ENCODE measurements at regions of chr20 and their contacts with region 1.

Region 1: GRCh38 chr20:561437-562231 is 18.0 kb upstream of the CSNK2A1 start:
- DNase-seq: peak; percentile 71 to 86 (median 79)
- H3K4me3 ChIP-seq: no peak overlapping the region
- H3K27ac ChIP-seq: no peak overlapping the region
- H3K4me1 ChIP-seq: no peaks in the 10 kb centered on the region
- H3K27me3 ChIP-seq: peaks cover 0 to 2% (median 0%) of the 10 kb centered on the region in 5 experiments

Region 2: DNA sequence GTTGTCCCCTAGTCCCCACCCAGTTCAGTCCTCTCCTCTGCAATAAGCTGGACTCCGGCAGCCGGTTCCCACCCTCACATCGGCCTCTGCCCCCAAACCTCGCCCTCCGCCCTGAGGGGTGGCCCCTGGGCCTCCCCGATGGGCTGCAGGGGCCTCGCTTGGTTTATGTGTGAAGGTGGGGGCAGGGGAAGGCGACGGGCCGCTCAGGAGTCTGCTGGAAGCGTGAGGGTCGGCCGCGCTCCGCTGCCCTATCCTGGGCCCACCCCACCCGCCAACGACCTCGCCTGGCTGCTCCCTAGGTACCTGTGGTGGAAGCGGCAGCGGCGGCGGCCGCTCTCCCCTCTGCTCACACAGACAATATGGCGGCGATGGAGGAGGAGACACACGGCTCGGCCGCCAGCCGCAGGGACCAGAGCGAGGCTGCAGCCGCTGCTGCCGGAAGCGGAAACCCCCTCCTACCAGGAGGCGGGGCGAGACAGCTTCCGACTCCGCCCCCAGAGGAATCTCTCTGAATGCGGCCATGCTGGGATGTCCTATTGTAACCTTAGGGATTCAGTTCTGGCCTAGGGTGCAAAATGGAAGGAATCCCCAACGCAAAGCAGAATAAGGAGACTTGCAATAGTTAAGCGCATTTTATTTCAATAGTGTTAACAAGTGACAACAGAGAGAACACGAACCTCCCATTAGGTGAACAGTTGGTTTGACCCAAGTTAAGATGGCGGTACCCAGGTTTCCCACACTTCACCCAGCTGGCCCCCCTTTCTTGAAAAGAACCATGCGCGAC is 18.1 kb before region 1 on chr20 and contains the start of gene CSNK2A1:
- CTCF ChIA-PET with region 1: interaction called, 20 read pairs
- POLR2A ChIA-PET with region 1: no interaction called
- DNase-seq: peak; percentile 97 to 98 (median 97)
- H3K4me3 ChIP-seq: peak within 1 kb of the TSS; percentile 69 to 94 (median 87)
- H3K27ac ChIP-seq: peak within 1 kb of the TSS; percentile 97 to 99
- H3K4me1 ChIP-seq: peaks cover 9 to 37% (median 16%) of the 10 kb centered on the region in 4 experiments
- H3K27me3 ChIP-seq: no peaks in the 10 kb centered on the region

Region 3: DNA sequence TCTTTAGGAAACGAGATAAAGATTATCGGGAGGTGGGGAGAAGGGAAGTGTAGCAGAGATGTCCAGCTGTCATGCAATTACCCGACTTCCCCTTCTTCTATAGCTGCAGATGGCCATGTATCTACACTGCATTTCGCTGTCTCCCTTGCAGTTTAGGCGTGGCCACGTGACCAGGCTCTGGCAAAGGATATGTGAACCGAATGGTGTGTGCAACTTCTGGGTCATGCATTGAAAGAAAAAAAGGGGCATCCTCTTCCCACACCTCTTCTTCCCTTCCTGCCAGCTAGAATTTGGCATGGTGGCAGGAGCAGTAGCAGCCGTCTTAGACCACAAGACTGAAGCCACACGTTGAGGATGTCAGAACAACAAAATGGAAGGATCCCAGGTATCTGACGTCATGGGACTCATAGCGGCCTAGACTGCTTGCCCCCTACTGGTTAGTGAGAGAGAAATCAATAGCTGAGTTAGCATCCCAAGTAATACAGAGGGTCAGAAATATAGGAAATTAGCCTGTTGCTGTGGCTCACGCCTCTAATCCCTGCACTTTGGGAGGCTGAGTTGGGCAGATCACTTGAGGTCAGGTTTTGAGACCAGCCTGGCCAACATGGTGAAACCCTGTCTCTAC is 15.6 kb after region 1 on chr20:
- CTCF ChIA-PET with region 1: interaction called, 21 read pairs
- POLR2A ChIA-PET with region 1: interaction called, 3 read pairs
- DNase-seq: peak in 2 of 3 donors; percentile 36 to 50
- H3K4me3 ChIP-seq: no peak overlapping the region
- H3K27ac ChIP-seq: no peak overlapping the region
- H3K4me1 ChIP-seq: peaks cover 0 to 23% (median under 1%) of the 10 kb centered on the region in 4 experiments
- H3K27me3 ChIP-seq: peaks cover 0 to 21% (median 5%) of the 10 kb centered on the region in 5 experiments

Measured in common myeloid progenitor, CD34-positive (primary cell).